ENCODE measurements at regions of chr21 and their contacts with region 1.

Region 1: DNA sequence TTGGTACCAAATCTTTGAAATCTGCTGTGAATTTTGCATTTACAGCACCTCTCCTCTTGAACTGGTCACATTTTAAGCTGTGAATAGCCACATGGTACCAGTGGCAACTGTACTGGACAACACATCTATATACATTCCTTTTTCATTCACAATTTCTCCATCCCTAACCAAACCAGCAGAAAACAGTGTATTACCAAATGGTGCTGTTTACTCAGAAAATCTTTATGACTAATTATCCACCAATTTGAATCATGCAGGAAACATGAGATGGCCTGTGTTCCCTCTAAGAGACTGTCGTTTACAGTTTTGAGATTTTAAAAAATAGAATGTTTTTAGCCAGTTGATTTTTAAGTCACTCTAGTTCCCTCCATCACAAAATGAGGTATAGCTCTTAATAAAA is 17.6 kb upstream of the CCT8 start:
- DNase-seq: no peak
- ATAC-seq: no peak
- H3K4me3 ChIP-seq: no peak overlapping the region
- H3K4me1 ChIP-seq: no peaks in the 10 kb centered on the region
- CTCF ChIP-seq: no peak

Region 2: GRCh38 chr21:29145354-29145782 is 54.3 kb after region 1 on chr21:
- intact Hi-C with region 1: loop called in 1 of 2 experiments (anchors 10 kb)
- DNase-seq: no peak
- ATAC-seq: peak; percentile 25
- H3K4me3 ChIP-seq: no peak overlapping the region
- H3K4me1 ChIP-seq: no peaks in the 10 kb centered on the region
- CTCF ChIP-seq: no peak

Region 3: GRCh38 chr21:29365661-29366265 is 274.7 kb after region 1 on chr21:
- intact Hi-C with region 1: loop called (anchors 5 to 10 kb)
- DNase-seq: no peak
- ATAC-seq: no peak
- H3K4me3 ChIP-seq: no peak overlapping the region
- H3K4me1 ChIP-seq: no peaks in the 10 kb centered on the region
- CTCF ChIP-seq: no peak

Region 4: GRCh38 chr21:29372063-29372802 is 281.2 kb after region 1 on chr21:
- intact Hi-C with region 1: loop called (anchors 5 to 10 kb)
- DNase-seq: peak in 1 of 3 donors; percentile 86
- ATAC-seq: peak; percentile 88
- H3K4me3 ChIP-seq: no peak overlapping the region
- H3K4me1 ChIP-seq: no peaks in the 10 kb centered on the region
- CTCF ChIP-seq: no peak

Measured in mucosa of descending colon (tissue), 3 donors.